Posterior vena cava (tissue), 2 donors: ENCODE measurements at regions of chr3 and their contacts with region 1.

Region 1: DNA sequence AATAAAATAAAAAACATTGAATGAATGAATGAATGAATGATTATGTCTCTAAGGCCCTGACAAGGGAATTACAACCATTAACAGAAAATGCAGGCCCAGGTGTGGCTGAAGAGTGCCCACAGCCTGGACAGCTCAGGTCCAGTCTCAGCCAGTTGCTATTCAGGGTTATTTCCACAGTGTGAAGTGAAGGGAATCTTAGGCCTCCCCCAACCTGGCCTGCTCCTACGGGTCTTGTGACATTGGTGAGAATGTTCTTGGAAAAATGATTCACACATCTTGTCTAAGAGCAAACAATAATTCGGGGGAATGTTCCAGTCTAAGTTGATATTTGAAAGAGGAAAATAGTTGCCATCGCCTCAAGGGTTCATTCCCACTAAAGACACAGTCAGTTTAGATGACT is 37.0 kb downstream of the MINDY4B start:
- DNase-seq: no peak

Region 2: GRCh38 chr3:150371741-150372254 is 496.5 kb before region 1 on chr3:
- intact Hi-C with region 1: loop called in 1 of 2 experiments (anchors 10 kb)
- DNase-seq: no peak

Region 3: GRCh38 chr3:150710097-150710496 is 158.2 kb before region 1 on chr3:
- intact Hi-C with region 1: loop called in 1 of 2 experiments (anchors 10 kb)
- DNase-seq: no peak

Region 4: DNA sequence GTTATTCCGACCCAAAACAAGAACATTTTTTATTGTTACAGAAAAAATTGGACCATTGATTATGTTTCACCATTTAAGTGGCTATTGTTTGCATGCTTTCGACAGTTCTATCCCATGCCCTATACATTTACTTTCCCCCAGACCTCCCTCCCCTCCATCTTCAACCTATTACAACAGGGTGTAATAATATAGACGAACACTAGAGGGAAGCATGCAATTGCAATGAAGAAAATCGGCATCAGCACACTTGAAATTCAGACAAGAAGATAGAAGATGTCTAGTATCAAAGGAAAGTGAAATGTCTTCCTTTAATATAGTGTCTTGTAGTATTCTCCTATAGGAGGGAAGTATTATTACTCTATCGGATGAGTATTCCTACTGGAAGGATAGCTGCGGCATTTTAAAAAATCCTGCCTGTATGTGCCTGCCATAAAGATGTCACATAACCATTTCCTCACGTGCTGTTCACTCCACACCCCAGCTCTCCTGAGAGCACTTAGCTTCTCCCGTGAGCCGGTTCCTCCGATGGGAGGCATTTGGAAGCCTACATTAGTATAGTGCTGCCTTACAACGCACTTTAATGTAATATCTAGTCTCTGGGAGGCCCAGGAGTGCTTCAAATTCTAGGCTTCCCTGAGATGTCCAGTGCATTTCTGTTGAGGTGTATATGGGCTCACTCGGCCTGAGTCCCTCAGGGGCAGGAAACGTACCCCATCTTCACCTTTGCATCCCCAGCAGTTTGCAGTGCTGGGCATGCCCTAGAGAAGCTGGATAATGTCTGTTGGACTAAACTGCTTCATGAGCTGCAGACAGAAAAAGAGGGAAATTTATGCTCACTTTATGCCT is 146.8 kb before region 1 on chr3:
- intact Hi-C with region 1: loop called (anchors 10 kb)
- DNase-seq: no peak

Region 5: DNA sequence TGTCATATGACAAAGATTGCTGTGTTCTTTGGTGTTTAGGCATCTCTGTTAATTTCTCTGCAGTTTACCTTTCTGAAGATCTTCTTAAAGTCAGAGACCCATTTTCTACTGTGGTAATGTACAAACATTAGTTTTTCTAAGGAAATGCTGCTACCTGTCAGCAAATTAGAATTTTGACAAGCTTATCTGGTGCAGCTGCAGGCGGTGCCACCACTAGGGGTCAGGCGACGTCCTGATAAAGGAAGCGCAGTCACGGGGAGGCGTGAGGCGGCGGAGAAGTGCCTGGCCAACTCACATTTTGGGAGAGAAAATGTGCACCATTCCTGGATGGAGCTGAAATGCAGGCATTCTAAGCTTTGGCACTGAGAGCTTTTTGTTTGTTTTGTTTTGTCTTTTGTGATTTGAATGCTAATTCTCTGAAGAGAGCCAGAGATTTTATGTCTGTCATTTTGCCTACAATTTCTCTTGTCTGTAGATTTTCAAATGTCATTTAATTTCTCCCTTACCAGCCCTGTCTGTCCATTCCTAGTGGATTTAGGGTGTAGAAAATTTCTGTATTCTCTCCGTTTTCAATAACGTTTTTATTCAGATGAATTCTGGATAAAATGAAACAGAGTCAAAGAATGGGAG is 80.4 kb before region 1 on chr3:
- intact Hi-C with region 1: loop called in 1 of 2 experiments (anchors 5 kb)
- DNase-seq: peak; percentile 96

Region 6: DNA sequence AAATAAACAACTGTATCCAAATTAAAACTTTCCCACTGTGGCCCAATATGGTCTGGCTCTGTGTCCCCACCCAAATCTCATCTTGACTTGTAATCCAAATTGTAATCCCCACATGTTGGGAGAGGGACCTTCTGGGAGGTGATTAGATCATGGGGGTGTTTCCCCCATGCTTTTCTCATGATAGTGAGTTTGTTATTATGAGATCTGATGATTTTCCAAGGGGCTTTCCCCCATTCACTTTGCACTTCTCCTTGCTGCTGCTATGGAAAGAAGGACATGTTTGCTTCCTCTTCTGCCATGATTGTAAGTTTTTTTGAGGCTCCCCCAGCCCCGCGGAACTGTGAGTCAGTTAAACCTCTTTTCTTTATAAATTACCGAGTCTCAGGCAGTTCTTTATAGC is 18.1 kb before region 1 on chr3:
- intact Hi-C with region 1: no loop called
- DNase-seq: no peak